A673 (cell line): ENCODE measurements at regions of chr4 and their contacts with region 1.

Region 1: GRCh38 chr4:78775303-78776030 is 683 bp upstream of the BMP2K start:
- DNase-seq: peak; percentile 78
- H3K4me3 ChIP-seq: peak overlapping the region; percentile 69
- H3K27ac ChIP-seq: peak overlapping the region; percentile 92
- H3K4me1 ChIP-seq: peaks cover 13% of the 10 kb centered on the region
- H3K27me3 ChIP-seq: no peaks in the 10 kb centered on the region
- CTCF ChIP-seq: no peak

Region 2: DNA sequence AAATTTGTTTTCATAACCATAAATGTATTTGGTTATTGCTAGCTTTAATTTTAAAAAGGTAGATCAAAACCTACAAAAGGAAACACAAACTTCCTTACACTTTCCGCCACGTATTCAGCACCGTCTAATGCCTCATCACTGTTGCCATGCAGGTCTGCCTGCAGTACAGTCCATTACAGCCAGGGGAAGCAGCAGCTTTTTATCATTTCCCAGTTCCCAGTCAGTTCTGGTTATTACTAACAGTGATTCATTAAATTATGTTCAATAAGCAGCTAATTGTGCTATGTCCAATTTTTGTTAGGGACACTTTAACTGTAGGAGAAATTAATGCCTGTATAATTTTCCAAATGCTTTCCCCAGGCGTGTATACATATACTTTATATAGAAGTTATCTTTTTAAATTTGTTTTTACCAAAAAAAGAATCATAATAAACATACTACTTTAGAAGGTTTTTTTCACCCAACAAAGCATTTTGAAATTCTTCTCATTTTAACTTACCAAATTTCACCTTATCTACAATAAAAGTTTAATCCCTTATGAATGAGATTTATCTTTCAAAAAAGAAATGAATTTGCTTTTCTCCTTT is 130.6 kb before region 1 on chr4:
- CTCF ChIA-PET with region 1: no interaction called
- POLR2A ChIA-PET with region 1: no interaction called
- intact Hi-C with region 1: loop called (anchors 10 kb)
- DNase-seq: peak; percentile 67
- H3K4me3 ChIP-seq: no peak overlapping the region
- H3K27ac ChIP-seq: peak overlapping the region; percentile 84
- H3K4me1 ChIP-seq: peaks cover 22% of the 10 kb centered on the region
- H3K27me3 ChIP-seq: no peaks in the 10 kb centered on the region
- CTCF ChIP-seq: peak; percentile 60